Activated CD4-positive, alpha-beta T cell treated with anti-CD3 and anti-CD28 coated beads, Interleukin-2, amount 10 ng/mL, durations not matched to agents 24 days and 14 days (primary cell): ENCODE measurements at regions of chr3 and their contacts with region 1.

Region 1: DNA sequence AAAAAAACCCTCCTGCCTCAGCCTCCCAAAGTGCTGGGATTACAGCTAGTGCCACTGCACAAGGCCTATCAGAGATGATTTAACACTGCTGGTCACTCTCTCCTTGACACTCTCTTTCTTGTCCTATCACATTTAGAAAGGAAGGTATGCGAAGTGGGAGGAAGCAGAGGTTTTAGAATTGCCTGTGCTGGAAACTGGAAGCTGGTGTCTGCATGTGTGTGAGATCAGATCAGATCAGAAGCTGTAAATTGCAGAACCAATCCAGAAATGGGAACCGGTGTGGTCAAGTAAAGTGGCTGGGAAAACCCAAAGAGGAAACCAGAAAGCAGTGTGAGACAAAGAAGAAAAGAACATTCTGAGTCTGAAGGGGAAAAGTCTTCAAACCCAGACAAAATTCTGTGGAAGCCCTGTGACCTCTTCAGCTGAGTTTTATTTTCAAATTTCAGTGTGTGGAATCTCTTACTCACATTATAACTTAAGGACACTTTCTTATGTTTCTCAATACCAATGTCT is 2.8 kb downstream of the EFHB start:
- DNase-seq: peak; percentile 73
- H3K4me3 Mint-ChIP-seq: peak overlapping the region; percentile 52
- H3K27ac Mint-ChIP-seq: peak overlapping the region; percentile 93
- H3K4me1 Mint-ChIP-seq: peaks cover 35% of the 10 kb centered on the region
- H3K27me3 Mint-ChIP-seq: peaks cover 2% of the 10 kb centered on the region

Region 2: GRCh38 chr3:19946832-19947548 is 15.8 kb after region 1 on chr3 and contains the start of gene RAB5A:
- intact Hi-C with region 1: loop called (anchors 1 kb)
- DNase-seq: peak; percentile 99
- H3K4me3 Mint-ChIP-seq: peak within 1 kb of the TSS; percentile 95
- H3K27ac Mint-ChIP-seq: peak within 1 kb of the TSS; percentile 99
- H3K4me1 Mint-ChIP-seq: peaks cover 30% of the 10 kb centered on the region
- H3K27me3 Mint-ChIP-seq: peaks cover 3% of the 10 kb centered on the region
- total RNA-seq, gene RAB5A: 58.7 and 60.5 TPM in 2 replicates

Region 3: GRCh38 chr3:20013396-20013795 is 82.2 kb after region 1 on chr3:
- intact Hi-C with region 1: no loop called
- DNase-seq: no peak
- H3K4me3 Mint-ChIP-seq: no peak overlapping the region
- H3K27ac Mint-ChIP-seq: no peak overlapping the region
- H3K4me1 Mint-ChIP-seq: no peaks in the 10 kb centered on the region
- H3K27me3 Mint-ChIP-seq: no peaks in the 10 kb centered on the region

Region 4: DNA sequence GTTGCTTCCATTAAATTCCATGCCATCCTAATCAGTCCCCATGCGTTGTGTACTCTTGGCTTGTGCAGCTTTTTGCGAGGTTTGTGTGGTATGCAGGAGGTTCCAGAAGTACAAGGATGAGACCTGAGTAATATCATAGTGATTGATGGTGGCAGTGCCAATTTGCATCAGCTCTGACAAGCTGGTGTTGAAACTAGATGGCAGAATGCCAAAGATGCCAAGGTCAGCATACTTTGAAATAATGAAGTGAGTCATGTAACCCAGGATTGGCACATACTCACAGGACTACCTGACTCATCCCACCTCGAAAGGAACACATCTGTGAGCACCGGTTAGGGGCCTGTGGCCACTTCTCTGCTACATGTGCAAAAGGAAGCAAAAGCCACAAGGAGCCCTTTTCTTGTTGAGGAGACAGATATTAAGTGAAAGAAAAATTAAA is 123.3 kb after region 1 on chr3:
- intact Hi-C with region 1: loop called (anchors 1 kb)
- DNase-seq: peak; percentile 84
- H3K4me3 Mint-ChIP-seq: no peak overlapping the region
- H3K27ac Mint-ChIP-seq: no peak overlapping the region
- H3K4me1 Mint-ChIP-seq: peaks cover 30% of the 10 kb centered on the region
- H3K27me3 Mint-ChIP-seq: no peaks in the 10 kb centered on the region

Region 5: GRCh38 chr3:20104167-20104661 is 173.0 kb after region 1 on chr3:
- intact Hi-C with region 1: loop called (anchors 1 kb)
- DNase-seq: peak; percentile 86
- H3K4me3 Mint-ChIP-seq: peak overlapping the region; percentile 67
- H3K27ac Mint-ChIP-seq: peak overlapping the region; percentile 86
- H3K4me1 Mint-ChIP-seq: peaks cover 57% of the 10 kb centered on the region
- H3K27me3 Mint-ChIP-seq: no peaks in the 10 kb centered on the region